ENCODE measurements at regions of chr18 and their contacts with region 1.

Region 1: GRCh38 chr18:79246348-79247108 is 149.2 kb upstream of the NFATC1 start:
- DNase-seq: peak; percentile 90
- ATAC-seq: peak; percentile 95
- H3K4me3 ChIP-seq: peak overlapping the region; percentile 67
- H3K27ac ChIP-seq: peak overlapping the region; percentile 90
- H3K4me1 ChIP-seq: peaks cover 7% of the 10 kb centered on the region
- H3K27me3 ChIP-seq: no peaks in the 10 kb centered on the region
- CTCF ChIP-seq: peak; percentile 96

Region 2: GRCh38 chr18:78984941-78985784 is 261.4 kb before region 1 on chr18:
- CTCF ChIA-PET with region 1: no interaction called
- POLR2A ChIA-PET with region 1: interaction called, 23 read pairs
- intact Hi-C with region 1: loop called (anchors 1 kb)
- DNase-seq: peak; percentile 27
- ATAC-seq: peak; percentile 57
- H3K4me3 ChIP-seq: peak overlapping the region; percentile 6; the same call in 1 of the 2 replicates
- H3K27ac ChIP-seq: no peak overlapping the region
- H3K4me1 ChIP-seq: 0 out of 2 replicates have a peak, but pooled peaks cover 4% of the 10 kb centered on the region
- H3K27me3 ChIP-seq: peaks cover 81% of the 10 kb centered on the region
- CTCF ChIP-seq: peak; percentile 41; the same call in 1 of the 2 replicates

Region 3: DNA sequence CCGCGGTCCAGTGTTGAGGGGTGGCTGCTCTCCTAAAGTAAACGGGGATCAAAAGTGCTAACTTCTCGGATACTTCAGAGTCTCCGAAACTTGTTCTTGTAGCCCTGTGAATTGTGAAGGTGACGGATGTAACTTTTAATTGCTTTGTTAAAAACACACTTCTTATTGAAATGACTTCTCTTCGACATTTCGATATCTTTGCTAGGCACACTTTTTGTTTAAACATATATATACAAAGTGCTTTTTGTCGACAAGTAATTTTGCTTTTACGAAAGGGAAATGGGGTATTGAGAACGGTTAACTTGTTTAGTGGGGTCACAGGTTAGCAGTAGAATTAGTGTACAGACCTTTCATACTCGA is 176.8 kb before region 1 on chr18:
- CTCF ChIA-PET with region 1: no interaction called
- POLR2A ChIA-PET with region 1: no interaction called
- intact Hi-C with region 1: loop called (anchors 1 kb)
- DNase-seq: no peak
- ATAC-seq: no peak
- H3K4me3 ChIP-seq: peak overlapping the region; percentile 87
- H3K27ac ChIP-seq: 0 out of 2 replicates have a peak overlapping the region, but pooled peaks have one; percentile 12
- H3K4me1 ChIP-seq: peaks cover 10% of the 10 kb centered on the region
- H3K27me3 ChIP-seq: no peaks in the 10 kb centered on the region
- CTCF ChIP-seq: no peak

Region 4: GRCh38 chr18:79203017-79203605 is 43.4 kb before region 1 on chr18:
- CTCF ChIA-PET with region 1: no interaction called
- POLR2A ChIA-PET with region 1: no interaction called
- intact Hi-C with region 1: loop called (anchors 2 kb)
- DNase-seq: peak; percentile 93
- ATAC-seq: peak; percentile 96
- H3K4me3 ChIP-seq: no peak overlapping the region
- H3K27ac ChIP-seq: no peak overlapping the region
- H3K4me1 ChIP-seq: peaks cover 20% of the 10 kb centered on the region
- H3K27me3 ChIP-seq: no peaks in the 10 kb centered on the region
- CTCF ChIP-seq: no peak

Region 5: DNA sequence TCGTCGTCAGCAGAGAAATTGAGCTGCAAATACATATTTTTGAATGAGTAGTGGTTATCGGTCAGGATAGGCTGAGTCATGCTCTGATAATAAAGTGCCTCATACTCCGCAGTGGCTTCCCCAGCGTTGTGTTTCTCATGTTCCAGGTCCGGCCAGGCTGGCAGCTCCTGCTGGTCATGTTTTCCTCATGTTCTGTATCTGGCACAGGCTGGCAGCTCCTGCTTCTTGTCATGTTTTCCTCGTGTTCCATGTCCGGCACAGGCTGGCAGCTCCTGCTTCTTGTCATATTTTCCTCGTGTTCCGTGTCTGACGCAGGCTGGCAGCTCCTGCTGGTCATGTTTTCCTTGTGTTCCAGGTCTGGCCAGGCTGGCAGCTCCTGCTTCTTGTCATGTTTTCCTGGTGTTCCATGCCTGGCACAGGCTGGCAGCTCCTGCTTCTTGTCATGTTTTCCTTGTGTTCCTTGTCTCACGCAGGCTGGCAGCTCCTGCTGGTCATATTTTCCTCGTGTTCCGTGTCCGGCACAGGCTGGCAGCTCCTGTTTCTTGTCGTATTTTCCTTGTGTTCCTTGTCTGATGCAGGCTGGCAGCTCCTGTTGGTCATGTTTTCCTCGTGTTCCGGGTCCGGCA is 28.4 kb before region 1 on chr18:
- CTCF ChIA-PET with region 1: interaction called, 10 read pairs
- POLR2A ChIA-PET with region 1: no interaction called
- intact Hi-C with region 1: no loop called
- DNase-seq: no peak
- ATAC-seq: peak; percentile 75
- H3K4me3 ChIP-seq: no peak overlapping the region
- H3K27ac ChIP-seq: no peak overlapping the region
- H3K4me1 ChIP-seq: no peaks in the 10 kb centered on the region
- H3K27me3 ChIP-seq: no peaks in the 10 kb centered on the region
- CTCF ChIP-seq: no peak

Region 6: DNA sequence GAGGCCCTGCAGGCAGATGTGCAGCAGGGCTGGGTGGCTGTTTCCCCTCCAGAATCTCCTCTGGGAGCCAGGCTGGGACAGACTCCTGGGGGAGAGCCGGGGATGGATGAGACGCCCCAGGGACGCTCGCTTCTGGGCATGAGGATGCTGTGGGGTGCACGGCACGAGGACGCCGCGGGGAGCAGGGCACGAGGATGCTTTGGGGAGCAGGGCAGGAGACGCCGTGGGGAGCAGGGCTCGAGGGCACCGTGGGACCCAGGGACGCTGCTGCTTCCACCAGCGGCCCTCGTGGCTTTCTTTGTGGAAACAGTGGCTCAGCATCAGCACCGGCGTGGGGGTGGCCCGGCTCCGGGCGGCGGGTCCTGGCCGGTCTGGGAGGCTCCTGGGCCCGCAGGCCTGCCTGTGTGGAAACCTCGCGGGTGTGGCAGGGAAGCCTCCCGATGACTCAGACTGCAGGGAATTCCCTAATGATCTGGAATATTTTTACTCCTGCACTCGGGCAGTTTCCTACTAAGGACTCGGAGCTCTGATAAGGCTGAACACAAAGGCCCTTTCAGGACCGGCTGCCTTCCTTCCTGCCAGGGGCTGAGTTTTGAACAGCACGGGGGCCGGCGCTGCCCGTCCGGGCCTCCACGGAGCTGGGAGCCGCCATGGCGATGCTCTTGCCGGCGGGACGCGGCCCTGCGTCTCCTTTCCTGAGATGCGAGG is 211.8 kb after region 1 on chr18:
- CTCF ChIA-PET with region 1: no interaction called
- POLR2A ChIA-PET with region 1: no interaction called
- intact Hi-C with region 1: no loop called
- DNase-seq: peak; percentile 80
- ATAC-seq: peak; percentile 94
- H3K4me3 ChIP-seq: no peak overlapping the region
- H3K27ac ChIP-seq: peak overlapping the region; percentile 49
- H3K4me1 ChIP-seq: peaks cover 11% of the 10 kb centered on the region
- H3K27me3 ChIP-seq: no peaks in the 10 kb centered on the region
- CTCF ChIP-seq: no peak

Region 7: GRCh38 chr18:79523736-79524180 is 277.2 kb after region 1 on chr18:
- CTCF ChIA-PET with region 1: no interaction called
- POLR2A ChIA-PET with region 1: no interaction called
- intact Hi-C with region 1: no loop called
- DNase-seq: no peak
- ATAC-seq: no peak
- H3K4me3 ChIP-seq: no peak overlapping the region
- H3K27ac ChIP-seq: no peak overlapping the region
- H3K4me1 ChIP-seq: no peaks in the 10 kb centered on the region
- H3K27me3 ChIP-seq: no peaks in the 10 kb centered on the region
- CTCF ChIP-seq: no peak

Region 8: GRCh38 chr18:79738581-79739439 is 492.3 kb after region 1 on chr18:
- CTCF ChIA-PET with region 1: no interaction called
- POLR2A ChIA-PET with region 1: no interaction called
- intact Hi-C with region 1: no loop called
- DNase-seq: no peak
- ATAC-seq: no peak
- H3K4me3 ChIP-seq: no peak overlapping the region
- H3K27ac ChIP-seq: no peak overlapping the region
- H3K4me1 ChIP-seq: no peaks in the 10 kb centered on the region
- H3K27me3 ChIP-seq: no peaks in the 10 kb centered on the region
- CTCF ChIP-seq: no peak

Measured in PC-3 (cell line).